HCT116 (cell line): ENCODE measurements at regions of chr1 and their contacts with region 1.

Region 1: DNA sequence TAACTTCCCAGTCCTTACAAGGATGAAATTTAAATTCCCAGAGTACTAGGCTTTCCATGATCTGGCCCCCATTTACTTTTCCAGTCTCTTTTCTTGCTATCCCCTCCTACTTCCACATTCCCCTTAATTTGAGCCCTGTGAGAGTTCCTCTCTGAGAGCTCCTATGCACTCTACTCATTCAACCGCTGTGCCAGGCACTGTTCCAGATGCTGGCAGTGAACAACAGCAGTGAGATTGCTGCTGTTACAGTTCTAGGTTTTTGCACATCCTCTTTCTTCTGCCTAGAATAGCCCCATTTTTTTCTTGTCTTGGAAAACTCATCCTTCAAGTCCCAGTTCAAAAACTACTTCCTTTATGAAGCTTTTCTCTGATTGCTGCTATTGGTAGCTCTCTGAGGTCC is 18.8 kb downstream of the ATF6 start:
- DNase-seq: no peak
- ATAC-seq: no peak
- H3K4me3 ChIP-seq: no peak overlapping the region
- H3K27ac ChIP-seq: no peak overlapping the region
- H3K4me1 ChIP-seq: no peaks in the 10 kb centered on the region
- H3K27me3 ChIP-seq: no peaks in the 10 kb centered on the region
- CTCF ChIP-seq: no peak
- POLR2A ChIP-seq: no peak
- RAD21 ChIP-seq: no peak

Region 2: GRCh38 chr1:161801955-161802354 is 17.0 kb after region 1 on chr1:
- CTCF ChIA-PET with region 1: no interaction called
- POLR2A ChIA-PET with region 1: no interaction called
- RAD21 ChIA-PET with region 1: no interaction called
- intact Hi-C with region 1: loop called (anchors 1 kb)
- DNase-seq: no peak
- ATAC-seq: no peak
- H3K4me3 ChIP-seq: no peak overlapping the region
- H3K27ac ChIP-seq: no peak overlapping the region
- H3K4me1 ChIP-seq: no peaks in the 10 kb centered on the region
- H3K27me3 ChIP-seq: no peaks in the 10 kb centered on the region
- CTCF ChIP-seq: no peak
- POLR2A ChIP-seq: no peak
- RAD21 ChIP-seq: no peak